ENCODE measurements at regions of chr10 and their contacts with region 1.

Region 1: DNA sequence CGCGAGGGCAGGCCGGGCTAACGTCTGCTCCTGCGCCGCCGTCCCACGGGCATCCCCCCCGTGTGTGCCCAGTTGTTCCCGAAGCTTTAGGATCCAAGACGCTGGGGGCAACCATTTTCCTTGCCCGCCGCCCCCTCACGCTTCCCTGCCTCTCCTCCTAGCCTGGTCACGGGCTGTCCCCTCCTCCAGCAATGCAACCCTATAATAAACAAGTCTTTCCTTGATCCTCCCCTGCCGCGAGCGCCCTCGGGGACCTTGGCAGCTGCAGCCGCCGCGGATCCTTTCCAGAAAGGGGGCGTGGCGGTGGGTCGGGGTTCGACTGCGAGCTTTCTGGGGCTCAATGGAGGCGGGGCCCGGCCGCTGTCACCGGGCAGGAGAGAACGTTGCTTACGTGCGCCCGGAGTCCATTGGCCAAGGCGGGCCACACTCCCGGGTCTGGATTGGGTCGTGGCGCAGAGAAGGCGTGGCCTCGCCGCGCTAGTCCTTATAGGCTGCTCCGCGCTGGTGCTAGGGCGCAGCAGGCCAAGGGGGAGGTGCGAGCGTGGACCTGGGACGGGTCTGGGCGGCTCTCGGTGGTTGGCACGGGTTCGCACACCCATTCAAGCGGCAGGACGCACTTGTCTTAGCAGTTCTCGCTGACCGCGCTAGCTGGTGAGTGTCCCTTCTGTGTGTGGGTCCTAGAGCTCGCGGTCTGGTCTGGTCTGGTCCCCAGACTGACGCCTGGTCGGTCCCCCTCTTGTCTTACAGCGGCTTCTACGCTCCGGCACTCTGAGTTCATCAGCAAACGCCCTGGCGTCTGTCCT is at the start of gene DDIT4:
- DNase-seq: peak; percentile 99
- ATAC-seq: peak; percentile 93
- H3K4me3 Mint-ChIP-seq: peak within 1 kb of the TSS; percentile 90
- H3K27ac Mint-ChIP-seq: peak within 1 kb of the TSS; percentile 91
- H3K4me1 Mint-ChIP-seq: peaks cover 64% of the 10 kb centered on the region
- H3K27me3 Mint-ChIP-seq: no peaks in the 10 kb centered on the region
- total RNA-seq, gene DDIT4: 382 to 384 TPM

Region 2: GRCh38 chr10:72126184-72126871 is 147.3 kb before region 1 on chr10:
- CTCF ChIA-PET with region 1: interaction called, 21 read pairs
- POLR2A ChIA-PET with region 1: interaction called, 3 read pairs
- DNase-seq: no peak
- ATAC-seq: no peak
- H3K4me3 Mint-ChIP-seq: no peak overlapping the region
- H3K27ac Mint-ChIP-seq: no peak overlapping the region
- H3K4me1 Mint-ChIP-seq: peaks cover 25% of the 10 kb centered on the region
- H3K27me3 Mint-ChIP-seq: no peaks in the 10 kb centered on the region

Region 3: GRCh38 chr10:72223743-72224101 is 49.9 kb before region 1 on chr10:
- CTCF ChIA-PET with region 1: interaction called, 59 read pairs
- POLR2A ChIA-PET with region 1: interaction called, 8 read pairs
- DNase-seq: no peak
- ATAC-seq: peak; percentile 22
- H3K4me3 Mint-ChIP-seq: peak overlapping the region; percentile 24
- H3K27ac Mint-ChIP-seq: peak overlapping the region; percentile 65
- H3K4me1 Mint-ChIP-seq: peaks cover 51% of the 10 kb centered on the region
- H3K27me3 Mint-ChIP-seq: no peaks in the 10 kb centered on the region

Region 4: DNA sequence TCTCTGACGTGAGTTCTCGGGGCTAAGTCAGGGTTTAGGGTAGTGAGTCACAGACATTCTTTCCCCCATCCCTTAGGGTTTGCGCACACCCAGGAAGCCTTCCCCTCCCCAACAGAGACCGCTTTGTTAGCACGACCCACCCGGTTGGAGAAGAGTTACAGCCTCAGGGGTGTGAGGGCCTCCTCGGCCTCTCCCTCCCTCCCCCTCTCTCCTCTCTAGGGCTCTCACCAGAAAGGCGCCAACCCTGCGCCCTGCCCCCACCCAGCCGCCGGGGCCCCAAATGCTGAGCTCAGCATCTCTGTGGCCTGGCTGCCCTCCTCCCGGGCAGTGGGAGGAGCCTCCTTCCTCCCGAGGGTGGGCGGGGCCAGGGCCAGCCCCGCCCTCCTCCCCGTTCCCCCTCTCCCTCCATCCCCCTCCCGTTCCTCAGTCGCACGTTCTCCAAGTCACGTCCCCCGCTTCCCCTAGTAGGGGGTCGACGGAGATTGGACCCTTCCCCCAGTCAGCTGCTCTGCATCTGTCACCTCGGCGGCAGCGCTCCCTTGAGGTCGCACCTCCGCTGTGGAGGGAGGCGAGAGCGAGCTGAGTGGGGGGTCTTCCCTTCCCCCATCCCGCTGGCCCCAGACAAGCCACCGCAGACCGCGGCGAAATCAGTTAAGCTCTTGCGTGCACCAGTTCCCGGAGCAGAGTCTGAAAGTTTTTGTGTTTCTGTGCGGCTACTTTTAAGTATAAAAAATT is 12.9 kb before region 1 on chr10:
- CTCF ChIA-PET with region 1: interaction called, 60 read pairs
- POLR2A ChIA-PET with region 1: interaction called, 88 read pairs
- DNase-seq: peak; percentile 97
- ATAC-seq: peak; percentile 74
- H3K4me3 Mint-ChIP-seq: peak overlapping the region; percentile 82
- H3K27ac Mint-ChIP-seq: peak overlapping the region; percentile 98
- H3K4me1 Mint-ChIP-seq: peaks cover 65% of the 10 kb centered on the region
- H3K27me3 Mint-ChIP-seq: no peaks in the 10 kb centered on the region

Region 5: GRCh38 chr10:72297968-72298773 is 24.6 kb after region 1 on chr10:
- CTCF ChIA-PET with region 1: interaction called, 55 read pairs
- POLR2A ChIA-PET with region 1: interaction called, 82 read pairs
- DNase-seq: peak; percentile 96
- ATAC-seq: peak; percentile 82
- H3K4me3 Mint-ChIP-seq: peak overlapping the region; percentile 72
- H3K27ac Mint-ChIP-seq: peak overlapping the region; percentile 98
- H3K4me1 Mint-ChIP-seq: peaks cover 65% of the 10 kb centered on the region
- H3K27me3 Mint-ChIP-seq: no peaks in the 10 kb centered on the region

Region 6: DNA sequence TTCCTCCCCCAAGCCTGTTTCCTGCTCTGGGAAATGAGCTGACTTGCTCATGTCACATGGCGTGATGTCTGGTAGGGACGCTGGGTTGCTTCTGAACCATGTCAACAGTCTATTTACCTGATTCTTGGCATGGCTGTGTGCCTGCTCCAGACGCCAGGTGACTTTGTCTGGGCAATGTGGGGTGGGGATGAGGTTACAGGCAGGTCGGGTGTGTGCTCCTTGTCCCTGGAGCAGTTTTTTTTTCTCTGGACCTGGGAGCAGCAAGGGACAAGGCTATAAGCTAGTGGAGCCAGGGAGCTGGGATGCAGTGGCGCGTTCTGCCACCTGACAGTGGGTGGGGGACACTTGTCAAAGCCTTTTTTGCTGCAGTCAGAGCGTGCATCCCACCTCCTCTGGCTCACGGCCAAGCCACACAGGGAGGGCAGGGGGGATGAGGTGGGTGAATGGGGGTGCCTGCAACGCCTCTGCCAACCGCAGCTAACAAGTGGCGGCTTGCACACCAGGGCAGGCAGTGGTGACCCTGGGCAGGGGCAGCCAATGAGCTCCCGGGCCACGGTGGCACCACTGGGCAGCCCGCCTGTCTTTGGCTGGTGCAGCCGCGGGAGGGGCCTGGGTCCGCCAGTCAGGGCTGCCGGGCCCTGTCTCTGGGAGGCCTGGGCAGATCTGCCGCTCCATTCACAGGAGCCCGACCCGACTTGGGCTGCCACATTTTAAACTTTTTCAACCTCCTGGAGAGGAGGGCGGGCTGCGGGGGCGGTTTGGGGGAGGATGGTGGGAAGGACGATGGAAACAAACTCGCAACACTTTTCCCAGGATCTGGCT is 58.2 kb after region 1 on chr10:
- CTCF ChIA-PET with region 1: interaction called, 122 read pairs
- POLR2A ChIA-PET with region 1: interaction called, 75 read pairs
- DNase-seq: peak; percentile 94
- ATAC-seq: peak; percentile 66
- H3K4me3 Mint-ChIP-seq: peak overlapping the region; percentile 64
- H3K27ac Mint-ChIP-seq: peak overlapping the region; percentile 91
- H3K4me1 Mint-ChIP-seq: peaks cover 95% of the 10 kb centered on the region
- H3K27me3 Mint-ChIP-seq: no peaks in the 10 kb centered on the region

Region 7: DNA sequence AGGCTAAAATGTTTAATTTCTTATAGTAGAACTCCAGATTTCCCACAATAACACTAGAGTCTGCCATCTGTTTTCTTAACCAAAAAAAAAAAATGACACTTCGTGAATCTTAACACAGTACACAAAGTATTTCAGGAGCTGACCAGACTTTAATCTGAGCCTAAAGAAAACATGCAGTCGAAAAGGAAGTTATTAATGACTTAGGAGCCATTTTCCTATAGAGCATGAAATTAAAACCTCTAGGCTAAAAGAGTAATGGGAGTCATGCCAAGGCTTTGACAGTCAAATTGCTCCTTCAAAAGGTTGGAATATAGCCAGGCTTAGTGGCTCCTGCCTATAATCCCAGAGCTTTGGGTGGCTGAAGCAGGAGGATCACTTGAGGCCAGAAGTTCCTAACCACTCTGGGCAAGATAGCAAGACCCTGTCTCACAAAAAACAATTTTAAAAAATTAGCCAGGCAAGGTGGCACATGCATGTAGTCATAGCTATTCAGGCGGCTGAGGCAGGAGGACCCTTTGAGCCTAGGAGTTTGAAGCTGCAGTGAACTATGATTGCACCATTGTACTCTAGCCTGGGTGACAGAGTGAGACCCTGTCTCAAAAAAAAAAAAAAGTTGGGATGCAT is 338.7 kb after region 1 on chr10:
- CTCF ChIA-PET with region 1: no interaction called
- POLR2A ChIA-PET with region 1: no interaction called
- DNase-seq: no peak
- ATAC-seq: no peak
- H3K4me3 Mint-ChIP-seq: no peak overlapping the region
- H3K27ac Mint-ChIP-seq: no peak overlapping the region
- H3K4me1 Mint-ChIP-seq: peaks cover 6% of the 10 kb centered on the region
- H3K27me3 Mint-ChIP-seq: no peaks in the 10 kb centered on the region

Measured in activated CD8-positive, alpha-beta T cell treated with anti-CD3 and anti-CD28 coated beads, Interleukin-2, amount 10 ng/mL, durations not matched to agents 7 days and 5 days (primary cell).